ENCODE measurements at regions of chr2 and their contacts with region 1.

Region 1: GRCh38 chr2:230924470-230925341 is at the start of gene GPR55:
- DNase-seq: peak; percentile 26
- H3K4me3 Mint-ChIP-seq: peak within 1 kb of the TSS; percentile 69
- H3K27ac Mint-ChIP-seq: peak within 1 kb of the TSS; percentile 78
- H3K4me1 Mint-ChIP-seq: peaks cover 51% of the 10 kb centered on the region
- H3K27me3 Mint-ChIP-seq: peaks cover 32% of the 10 kb centered on the region
- total RNA-seq, gene GPR55: 0.57 and 0.78 TPM in 2 replicates

Region 2: DNA sequence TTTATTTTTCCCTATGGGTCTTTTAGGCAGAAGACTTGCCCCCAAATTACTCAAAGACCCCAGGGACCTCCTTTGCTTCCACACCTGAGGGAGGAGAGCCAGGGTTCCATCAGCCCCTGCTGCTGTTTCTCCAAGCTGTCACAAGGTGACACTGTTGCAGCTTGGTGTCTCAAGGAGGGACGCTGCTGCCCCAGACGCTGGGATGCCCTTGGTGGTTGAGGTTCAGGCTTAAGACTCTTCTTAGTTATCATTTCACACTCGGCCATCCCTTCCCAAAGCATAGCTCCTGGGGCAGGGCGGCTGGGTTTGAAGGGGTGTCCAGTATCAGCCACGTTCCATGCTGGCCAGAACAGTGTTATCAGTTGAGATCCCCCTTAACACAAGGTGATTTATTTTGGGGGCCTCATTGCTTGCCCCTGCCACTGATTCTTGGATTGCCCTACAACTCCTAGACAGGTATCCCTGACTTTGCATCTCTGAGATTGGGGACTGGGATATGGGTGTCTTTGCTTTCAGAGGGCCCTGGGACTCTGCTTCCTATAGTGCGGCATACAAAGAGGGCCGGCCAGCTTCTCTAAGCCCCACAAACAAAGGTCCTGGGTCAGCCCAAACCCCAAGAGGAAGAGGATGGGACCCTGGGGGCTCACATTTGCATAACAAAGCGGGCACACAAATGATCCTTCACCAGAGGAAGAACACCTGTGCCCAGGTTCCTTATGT is 22.4 kb before region 1 on chr2:
- intact Hi-C with region 1: loop called (anchors 1 kb)
- DNase-seq: no peak
- H3K4me3 Mint-ChIP-seq: no peak overlapping the region
- H3K27ac Mint-ChIP-seq: no peak overlapping the region
- H3K4me1 Mint-ChIP-seq: peaks cover 33% of the 10 kb centered on the region
- H3K27me3 Mint-ChIP-seq: peaks cover 35% of the 10 kb centered on the region

Region 3: DNA sequence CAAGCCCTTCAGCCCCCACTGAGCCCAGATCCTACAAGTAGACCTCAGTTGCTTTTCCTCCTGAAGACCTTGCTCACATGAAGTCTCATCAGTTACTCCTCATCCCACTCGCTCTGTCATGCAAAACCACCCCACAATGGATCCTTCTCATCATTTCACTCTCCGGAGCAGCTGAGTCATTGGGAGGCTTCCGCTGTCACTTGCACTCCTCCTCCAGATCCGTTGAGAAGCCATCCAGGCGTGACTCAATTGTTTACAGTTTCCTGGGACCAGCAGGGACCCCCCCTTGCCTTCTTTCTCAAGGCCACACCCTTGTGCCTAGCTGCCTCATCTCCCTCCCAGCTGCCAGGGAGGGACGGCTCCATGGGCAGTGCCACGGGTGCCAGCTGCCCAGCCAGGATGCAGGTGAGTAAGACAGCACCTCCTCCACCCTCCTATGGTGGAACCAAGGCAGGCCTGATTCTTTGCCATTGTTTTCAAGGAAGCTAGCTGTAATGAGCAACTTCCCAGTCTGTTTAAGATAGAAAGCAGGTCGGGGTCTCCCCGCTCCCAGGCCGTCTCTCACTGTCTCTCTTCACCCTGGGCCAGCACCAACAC is 16.0 kb before region 1 on chr2:
- intact Hi-C with region 1: loop called (anchors 1 kb)
- DNase-seq: no peak
- H3K4me3 Mint-ChIP-seq: peak overlapping the region; percentile 74
- H3K27ac Mint-ChIP-seq: peak overlapping the region; percentile 75
- H3K4me1 Mint-ChIP-seq: peaks cover 54% of the 10 kb centered on the region
- H3K27me3 Mint-ChIP-seq: peaks cover 39% of the 10 kb centered on the region

Region 4: DNA sequence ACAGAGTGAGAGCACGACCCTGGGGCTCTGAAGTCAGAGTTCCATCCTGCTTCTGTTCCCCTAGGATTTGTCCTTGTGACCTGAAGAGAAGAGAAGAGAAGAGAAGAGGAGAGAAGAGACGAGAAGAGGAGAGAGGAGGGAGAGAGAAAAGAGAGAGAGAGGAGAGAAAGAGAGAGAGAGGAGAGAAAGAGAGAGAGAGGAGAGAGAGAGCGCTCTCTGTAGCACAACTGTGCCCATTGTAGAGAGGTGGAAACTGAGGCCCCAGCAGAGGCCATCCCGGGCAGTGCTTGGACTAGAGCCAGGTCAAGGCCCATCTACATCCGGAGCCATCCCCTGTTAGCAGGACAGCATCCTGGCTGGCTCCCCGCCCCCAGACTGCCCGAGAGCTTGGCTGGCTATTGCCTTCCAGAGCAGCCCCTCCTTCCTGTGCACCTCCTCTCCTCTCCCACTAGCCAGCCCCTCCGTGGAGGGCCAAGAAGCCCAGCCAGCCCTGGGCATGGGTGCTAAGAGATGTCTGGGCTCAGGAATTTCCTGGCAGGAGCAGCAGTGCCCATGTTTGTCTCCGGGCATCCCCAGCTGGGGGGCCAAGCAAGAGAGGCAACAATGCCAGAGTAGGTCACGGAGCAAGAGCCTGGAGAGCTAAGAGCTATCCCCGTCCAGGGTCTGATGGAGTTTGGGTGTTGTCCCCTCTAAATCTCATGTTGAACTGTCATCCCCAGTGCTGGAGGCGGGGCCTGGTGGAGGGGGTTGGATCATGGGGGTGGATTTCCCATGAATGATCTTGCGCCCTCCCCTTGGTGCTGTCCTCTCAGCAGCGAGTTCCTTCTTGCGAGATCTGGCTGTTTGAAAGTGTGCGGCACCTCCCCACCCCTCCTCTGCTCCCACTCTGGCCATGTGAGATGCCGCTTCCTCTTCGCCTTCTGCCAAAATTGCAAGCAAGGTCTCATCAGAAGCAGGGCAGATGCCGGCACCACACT is 18.5 kb after region 1 on chr2:
- intact Hi-C with region 1: loop called (anchors 2 kb)
- DNase-seq: no peak
- H3K4me3 Mint-ChIP-seq: peak overlapping the region; percentile 3
- H3K27ac Mint-ChIP-seq: no peak overlapping the region
- H3K4me1 Mint-ChIP-seq: peaks cover 14% of the 10 kb centered on the region
- H3K27me3 Mint-ChIP-seq: peaks cover 23% of the 10 kb centered on the region

Region 5: DNA sequence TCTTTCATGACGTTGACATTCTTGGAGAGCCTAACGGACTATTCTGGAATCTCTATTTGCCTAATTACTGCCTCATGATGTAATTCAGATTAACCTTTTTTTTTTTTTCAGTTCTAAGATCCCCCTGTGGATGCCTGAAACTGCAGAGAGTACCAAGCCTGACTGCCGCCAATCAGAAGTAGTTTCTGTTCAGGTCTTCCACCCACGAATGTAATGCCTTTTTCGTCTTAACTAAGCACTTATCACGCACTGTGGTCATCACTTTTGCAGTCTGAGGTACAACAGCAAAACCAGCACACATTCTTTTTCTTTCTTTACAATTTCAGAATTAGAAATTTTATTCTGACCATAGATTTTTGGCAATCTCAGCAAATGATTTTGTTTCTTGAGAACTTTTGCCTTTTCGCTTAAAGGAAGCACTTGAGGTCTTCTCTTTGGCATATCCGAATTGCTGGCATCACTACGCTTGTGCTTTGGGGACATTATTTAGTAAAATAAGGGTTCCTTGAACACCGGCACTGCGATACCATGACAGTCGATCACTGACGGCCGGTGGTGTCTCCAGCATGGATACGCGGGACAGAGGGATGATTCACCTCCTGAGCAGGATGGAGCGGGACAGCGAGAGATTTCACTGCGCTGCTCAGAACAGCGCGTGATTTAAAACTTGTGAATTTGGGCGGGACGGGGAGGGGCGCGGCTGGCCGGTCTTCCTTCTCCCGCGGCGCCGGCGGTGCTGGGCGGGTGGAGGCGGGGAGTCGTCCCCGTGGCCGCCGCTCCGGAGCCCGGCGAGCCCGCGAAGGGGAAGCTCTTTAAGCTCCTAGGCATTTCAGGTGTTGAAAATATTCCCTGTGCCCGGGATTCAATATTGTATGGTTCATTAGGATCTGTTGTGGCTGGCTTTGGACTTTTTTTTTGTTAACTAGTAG is 32.4 kb after region 1 on chr2:
- intact Hi-C with region 1: loop called (anchors 1 kb)
- DNase-seq: no peak
- H3K4me3 Mint-ChIP-seq: peak overlapping the region; percentile 86
- H3K27ac Mint-ChIP-seq: peak overlapping the region; percentile 85
- H3K4me1 Mint-ChIP-seq: peaks cover 42% of the 10 kb centered on the region
- H3K27me3 Mint-ChIP-seq: peaks cover 71% of the 10 kb centered on the region

Region 6: GRCh38 chr2:230974096-230974913 is 49.6 kb after region 1 on chr2:
- intact Hi-C with region 1: loop called (anchors 1 kb)
- DNase-seq: peak; percentile 57
- H3K4me3 Mint-ChIP-seq: peak overlapping the region; percentile 40
- H3K27ac Mint-ChIP-seq: peak overlapping the region; percentile 89
- H3K4me1 Mint-ChIP-seq: peaks cover 54% of the 10 kb centered on the region
- H3K27me3 Mint-ChIP-seq: peaks cover 33% of the 10 kb centered on the region

Measured in activated T-helper 2 cell treated with anti-CD3 and anti-CD28 coated beads, Interferon-gamma antibody, Interleukin-2, Interleukin-4, amounts not matched to agents 10 μg/mL and 5 μg/mL and 100 μg/mL, durations not matched to agents 14 hours and 24 hours and 36 hours (primary cell).